ENCODE measurements at regions of chr4 and their contacts with region 1.

Region 1: DNA sequence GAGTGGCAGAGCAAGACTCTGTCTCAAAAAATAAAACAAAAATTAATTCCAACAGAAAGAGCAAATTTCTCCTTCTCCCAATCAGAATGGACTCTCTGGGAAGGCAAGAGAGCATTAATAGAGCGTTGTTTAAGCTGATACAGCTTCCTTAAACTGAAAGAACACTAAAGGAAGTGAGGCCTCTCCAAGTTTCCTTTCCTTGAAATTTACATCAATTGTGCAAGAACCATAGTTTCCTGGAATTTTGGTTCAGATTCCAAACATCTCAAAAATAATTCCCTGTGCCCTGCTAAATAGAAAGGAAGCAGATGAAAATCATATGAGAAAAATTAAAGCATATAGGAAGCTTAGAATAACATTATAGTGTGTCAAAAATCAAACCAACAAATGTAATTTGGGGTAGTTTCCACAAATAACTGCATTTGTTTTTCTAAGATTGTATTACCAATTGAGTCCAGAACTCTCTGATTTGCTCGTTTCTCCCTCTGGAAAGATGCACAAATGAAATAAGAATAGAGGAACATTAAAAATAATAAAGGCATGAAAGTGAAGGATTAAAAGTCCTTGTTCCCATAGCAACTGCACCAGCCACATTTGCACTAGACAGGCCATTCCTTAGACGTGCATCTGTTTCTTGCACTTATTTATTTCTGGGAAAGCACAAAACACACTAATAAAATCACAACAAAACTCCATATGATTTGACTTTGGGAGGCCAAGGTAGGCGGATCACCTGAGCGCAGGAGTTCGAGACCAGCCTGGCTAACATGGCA is 3.7 kb upstream of the FAM241A start:
- DNase-seq: no peak
- H3K4me3 ChIP-seq: no peak overlapping the region
- H3K27ac ChIP-seq: no peak overlapping the region
- H3K27me3 ChIP-seq: no peaks in the 10 kb centered on the region
- CTCF ChIP-seq: no peak

Region 2: GRCh38 chr4:112189754-112190153 is 48.2 kb after region 1 on chr4:
- CTCF ChIA-PET with region 1: no interaction called
- POLR2A ChIA-PET with region 1: interaction called, 10 read pairs
- DNase-seq: no peak
- H3K4me3 ChIP-seq: no peak overlapping the region
- H3K27ac ChIP-seq: peak overlapping the region; percentile 21
- H3K27me3 ChIP-seq: no peaks in the 10 kb centered on the region
- CTCF ChIP-seq: peak; percentile 32

Measured in AG04450 (cell line).